Prostate gland (tissue), 2 donors: ENCODE measurements at regions of chr7 and their contacts with region 1.

Region 1: DNA sequence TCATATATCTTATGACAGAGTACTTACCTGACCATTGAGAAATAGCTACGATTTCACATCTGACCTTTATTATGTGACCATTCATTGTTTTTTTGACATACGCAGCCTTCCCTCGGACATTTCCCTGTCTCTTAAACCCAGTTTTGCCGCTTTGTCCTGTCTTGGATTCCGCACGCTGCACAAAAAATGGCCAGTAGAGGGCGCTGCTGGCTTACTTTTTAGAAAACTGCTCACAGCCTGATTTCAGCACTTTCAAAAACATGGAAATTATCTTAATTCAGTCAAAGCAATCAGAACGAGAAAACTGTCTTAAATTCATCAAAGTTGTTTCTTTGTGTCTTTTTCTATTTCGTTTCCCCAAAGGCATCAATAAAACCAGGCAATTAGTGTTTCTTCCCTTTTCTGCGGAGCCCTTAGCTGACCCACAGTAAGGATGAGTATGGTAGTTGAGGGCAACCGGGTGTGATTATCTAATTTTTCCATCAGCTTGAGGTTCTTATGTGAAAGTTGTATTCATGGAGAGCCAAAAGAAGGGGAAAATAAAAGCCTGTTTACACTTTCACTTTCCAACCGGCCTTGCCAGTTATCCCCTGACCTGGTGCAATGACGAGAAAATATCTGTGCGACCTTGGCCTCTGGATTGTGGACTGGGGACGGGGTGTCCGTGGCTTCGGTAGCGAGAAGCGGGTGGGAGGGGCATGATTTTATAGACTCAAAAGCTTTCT is 144.4 kb downstream of the DYNC1I1 start:
- DNase-seq: peak; percentile 78
- H3K4me3 ChIP-seq: no peak overlapping the region
- H3K27ac ChIP-seq: no peak overlapping the region
- H3K4me1 ChIP-seq: no peaks in the 10 kb centered on the region
- H3K27me3 ChIP-seq: no peaks in the 10 kb centered on the region
- CTCF ChIP-seq: peak; percentile 82 to 94 (median 85)
- POLR2A ChIP-seq: no peak

Region 2: DNA sequence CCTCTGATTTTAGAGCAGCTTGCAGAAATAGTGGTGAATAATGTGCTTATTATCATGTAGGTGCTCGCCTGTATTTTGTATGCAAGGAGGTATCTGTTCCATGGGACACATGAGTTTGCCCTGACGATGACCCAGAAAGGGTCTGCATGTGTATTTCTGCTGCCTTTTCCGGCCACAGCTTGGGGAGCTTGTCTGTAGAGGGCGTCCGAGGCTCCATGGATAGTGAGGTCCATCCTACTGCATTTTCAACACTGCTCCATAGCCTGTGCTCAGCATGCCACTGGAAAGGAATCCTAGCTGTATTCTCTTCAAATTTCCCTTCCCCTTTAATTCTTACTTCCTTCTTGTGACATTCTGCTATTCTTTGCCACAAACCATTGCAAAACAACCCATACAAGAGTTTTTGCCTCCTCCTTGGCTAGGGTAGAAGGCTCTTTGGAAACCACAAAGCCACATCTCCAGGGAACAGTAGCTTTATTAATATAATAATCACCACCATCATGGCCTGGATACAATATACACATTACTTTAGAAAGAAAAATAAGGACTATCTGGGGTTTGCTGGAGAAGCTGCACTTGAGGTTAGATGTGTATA is 16.7 kb before region 1 on chr7:
- intact Hi-C with region 1: no loop called
- DNase-seq: no peak
- H3K4me3 ChIP-seq: no peak overlapping the region
- H3K27ac ChIP-seq: no peak overlapping the region
- H3K4me1 ChIP-seq: no peaks in the 10 kb centered on the region
- H3K27me3 ChIP-seq: no peaks in the 10 kb centered on the region
- CTCF ChIP-seq: no peak
- POLR2A ChIP-seq: no peak

Region 3: GRCh38 chr7:96075510-96076349 is 159.0 kb after region 1 on chr7:
- intact Hi-C with region 1: loop called (anchors 10 kb)
- DNase-seq: peak; percentile 45
- H3K4me3 ChIP-seq: peak overlapping the region; percentile 22 to 34
- H3K27ac ChIP-seq: no peak overlapping the region
- H3K4me1 ChIP-seq: no peaks in the 10 kb centered on the region
- H3K27me3 ChIP-seq: no peaks in the 10 kb centered on the region
- CTCF ChIP-seq: peak; percentile 58 to 74 (median 66)
- POLR2A ChIP-seq: no peak